ENCODE measurements at regions of chr14 and their contacts with region 1.

Region 1: DNA sequence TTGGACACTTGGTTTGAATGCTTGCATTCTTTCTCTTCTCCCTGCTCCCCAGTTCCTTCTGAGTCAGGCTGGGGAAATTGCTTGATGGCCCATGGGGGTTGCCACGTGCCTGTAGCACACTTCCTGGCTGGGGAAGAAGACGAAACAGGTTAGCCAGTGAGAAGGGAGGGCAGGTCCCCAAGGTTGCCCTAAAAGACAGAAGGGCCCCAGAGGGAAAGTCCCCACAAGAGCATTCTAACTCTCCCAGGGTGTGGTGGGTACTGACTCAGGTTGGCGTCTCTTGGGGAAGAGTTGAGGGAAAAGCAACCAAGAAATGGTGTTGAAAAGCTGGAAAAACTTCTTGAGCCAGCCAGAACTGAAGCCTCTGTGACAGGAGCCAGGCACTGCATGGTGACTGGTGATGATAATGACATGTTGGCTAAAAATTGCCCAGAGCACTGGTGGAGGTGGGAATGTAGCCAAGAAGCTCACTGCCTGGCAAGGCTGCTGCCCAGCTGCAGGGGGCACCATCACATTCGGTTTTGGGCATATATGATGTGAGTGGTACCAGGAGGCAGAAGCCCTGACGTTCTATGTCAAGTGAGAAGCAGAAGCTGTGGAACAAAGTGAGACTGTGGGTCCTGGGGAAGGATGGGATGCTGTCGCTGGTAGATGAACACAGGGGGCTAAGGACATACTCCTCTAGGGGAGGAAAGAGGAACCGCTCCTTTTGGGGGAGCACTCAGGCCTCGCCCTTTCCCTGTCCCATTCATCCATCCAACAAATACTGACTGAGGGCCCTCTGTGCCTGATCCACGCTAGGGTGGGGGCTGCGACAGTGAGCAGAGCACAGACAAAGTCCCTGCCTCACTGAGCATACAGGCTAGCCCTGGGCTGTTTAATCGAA is 8.1 kb upstream of the RABGGTA start:
- DNase-seq: peak; percentile 79 to 89 (median 88)
- H3K4me3 ChIP-seq: peak overlapping the region in 1 of 7 experiments; percentile 1
- H3K27ac ChIP-seq: no peak overlapping the region
- H3K4me1 ChIP-seq: peaks cover 19 to 62% (median 38%) of the 10 kb centered on the region in 4 experiments
- H3K27me3 ChIP-seq: no peaks in the 10 kb centered on the region

Region 2: DNA sequence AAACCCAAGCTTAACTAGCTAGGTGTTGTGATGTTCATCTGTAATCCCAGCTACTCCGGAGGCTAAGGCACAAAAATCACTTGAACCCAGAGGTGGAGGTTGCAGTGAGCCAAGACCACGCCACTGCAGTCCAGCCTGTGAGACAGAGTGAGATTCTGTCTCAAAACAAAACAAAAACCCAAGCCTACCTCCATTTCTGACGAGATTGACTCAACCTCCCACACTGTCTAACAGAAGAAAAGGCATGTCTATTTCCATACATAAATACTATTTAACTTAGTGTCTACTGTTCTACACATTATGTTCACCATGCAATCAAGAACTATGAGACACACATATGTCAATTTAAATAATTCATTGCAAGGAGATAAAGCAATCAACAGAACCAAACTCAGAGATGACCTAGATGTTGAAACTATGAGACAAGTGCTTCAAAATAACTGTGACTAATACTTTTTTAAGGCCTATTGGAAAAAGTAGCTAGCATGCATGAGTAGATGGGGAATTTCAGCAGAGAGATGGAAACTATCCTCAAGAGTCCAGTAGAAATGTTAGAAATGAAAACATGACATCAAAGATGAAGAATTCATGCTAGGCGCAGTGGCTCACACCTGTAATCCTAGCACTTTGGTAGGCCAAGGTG is 401.9 kb before region 1 on chr14:
- CTCF ChIA-PET with region 1: no interaction called
- POLR2A ChIA-PET with region 1: no interaction called
- DNase-seq: no peak
- H3K4me3 ChIP-seq: no peak overlapping the region
- H3K27ac ChIP-seq: no peak overlapping the region
- H3K4me1 ChIP-seq: no peaks in the 10 kb centered on the region
- H3K27me3 ChIP-seq: no peaks in the 10 kb centered on the region

Region 3: DNA sequence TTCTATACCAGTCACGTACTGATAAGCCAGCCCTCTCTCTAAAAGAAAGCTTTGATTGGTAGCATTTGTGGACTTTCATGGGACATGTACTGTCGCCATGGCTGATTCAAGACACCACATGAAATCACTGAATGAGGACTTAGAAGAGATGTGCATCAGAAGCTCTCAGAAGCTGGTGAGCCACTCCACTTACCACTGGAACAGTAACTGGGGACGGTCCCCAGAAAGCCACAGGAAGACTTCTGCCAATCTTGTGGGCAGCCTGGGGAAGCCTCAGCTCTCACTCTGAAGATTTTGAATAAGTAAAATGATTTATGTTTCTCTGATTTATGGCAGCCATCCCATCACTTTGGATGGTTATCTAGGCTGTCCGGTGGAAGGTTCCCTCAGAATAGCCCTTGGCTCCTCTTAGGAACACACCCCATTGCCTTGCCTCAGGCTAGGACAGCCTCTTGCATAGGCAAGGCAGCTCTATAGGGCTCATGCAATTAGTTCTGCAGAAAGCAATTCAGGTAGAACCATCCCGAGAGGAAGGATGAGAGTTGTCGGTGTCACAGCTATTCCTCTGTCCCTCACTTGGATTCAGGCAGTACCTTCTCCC is 10.2 kb after region 1 on chr14:
- CTCF ChIA-PET with region 1: interaction called, 153 read pairs
- POLR2A ChIA-PET with region 1: no interaction called
- DNase-seq: peak in 2 of 3 donors; percentile 42 to 47
- H3K4me3 ChIP-seq: no peak overlapping the region
- H3K27ac ChIP-seq: no peak overlapping the region
- H3K4me1 ChIP-seq: no peaks in the 10 kb centered on the region
- H3K27me3 ChIP-seq: no peaks in the 10 kb centered on the region